ENCODE measurements at regions of chr5 and their contacts with region 1.

Region 1: GRCh38 chr5:139611703-139612584 is 36.2 kb upstream of the CXXC5 start:
- DNase-seq: no peak
- H3K4me3 ChIP-seq: no peak overlapping the region
- H3K4me3 Mint-ChIP-seq: no peak overlapping the region
- H3K27ac Mint-ChIP-seq: no peak overlapping the region
- H3K4me1 ChIP-seq: no peaks in the 10 kb centered on the region
- H3K4me1 Mint-ChIP-seq: no peaks in the 10 kb centered on the region
- H3K27me3 ChIP-seq: no peaks in the 10 kb centered on the region
- H3K27me3 Mint-ChIP-seq: no peaks in the 10 kb centered on the region
- CTCF ChIP-seq: no peak

Region 2: GRCh38 chr5:139919308-139919707 is 307.4 kb after region 1 on chr5:
- CTCF ChIA-PET with region 1: no interaction called
- POLR2A ChIA-PET with region 1: interaction called, 15 read pairs
- intact Hi-C with region 1: no loop called
- DNase-seq: no peak
- H3K4me3 ChIP-seq: no peak overlapping the region
- H3K4me3 Mint-ChIP-seq: no peak overlapping the region
- H3K27ac Mint-ChIP-seq: no peak overlapping the region
- H3K4me1 ChIP-seq: no peaks in the 10 kb centered on the region
- H3K4me1 Mint-ChIP-seq: no peaks in the 10 kb centered on the region
- H3K27me3 ChIP-seq: no peaks in the 10 kb centered on the region
- H3K27me3 Mint-ChIP-seq: peaks cover 13% of the 10 kb centered on the region
- CTCF ChIP-seq: no peak

Region 3: DNA sequence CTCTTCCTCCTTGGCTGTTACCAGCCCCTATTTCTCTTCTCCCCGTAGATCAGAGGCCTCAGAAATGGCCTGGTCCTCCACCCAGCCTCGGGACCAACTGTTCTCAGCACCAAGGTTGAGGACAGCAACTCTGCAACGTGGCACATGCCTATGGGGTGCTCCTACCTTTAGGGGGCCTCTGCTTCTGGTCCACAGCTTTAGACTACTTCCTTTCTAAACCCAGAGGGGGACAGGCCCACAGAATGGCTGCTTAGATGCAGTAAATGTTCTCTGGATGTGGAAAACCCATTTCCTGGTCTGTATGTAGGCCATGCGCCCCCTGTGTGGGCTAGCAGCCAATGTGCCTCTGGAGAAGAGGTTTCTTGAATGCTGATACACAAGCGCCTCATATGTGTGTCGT is 362.7 kb after region 1 on chr5:
- CTCF ChIA-PET with region 1: no interaction called
- POLR2A ChIA-PET with region 1: no interaction called
- intact Hi-C with region 1: no loop called
- DNase-seq: no peak
- H3K4me3 ChIP-seq: no peak overlapping the region
- H3K4me3 Mint-ChIP-seq: no peak overlapping the region
- H3K27ac Mint-ChIP-seq: no peak overlapping the region
- H3K4me1 ChIP-seq: peaks cover 5% of the 10 kb centered on the region
- H3K4me1 Mint-ChIP-seq: no peaks in the 10 kb centered on the region
- H3K27me3 ChIP-seq: no peaks in the 10 kb centered on the region; the same call in 1 of the 2 replicates
- H3K27me3 Mint-ChIP-seq: no peaks in the 10 kb centered on the region
- CTCF ChIP-seq: no peak